H1 (cell line): ENCODE measurements at regions of chr4 and their contacts with region 1.

Region 1: GRCh38 chr4:112648263-112649054 is 11.5 kb downstream of the LARP7 start:
- DNase-seq: peak in 1 of 2 experiments; percentile 74
- H3K4me3 ChIP-seq: peak overlapping the region; percentile 75 to 100 (median 100)
- H3K27ac ChIP-seq: peak overlapping the region; percentile 92
- H3K4me1 ChIP-seq: peaks cover 0 to 10% (median 1%) of the 10 kb centered on the region in 4 experiments; a peak in 2 of 7 replicates
- H3K27me3 ChIP-seq: no peaks in the 10 kb centered on the region
- CTCF ChIP-seq: no peak
- EP300 ChIP-seq: peak in 1 of 2 experiments; percentile 64; a peak in 1 of 3 replicates
- POLR2A ChIP-seq: peak; percentile 95 to 98
- RAD21 ChIP-seq: no peak

Region 2: GRCh38 chr4:112626228-112626627 is 22.2 kb before region 1 on chr4:
- CTCF ChIA-PET with region 1: no interaction called
- POLR2A ChIA-PET with region 1: no interaction called
- DNase-seq: no peak
- H3K4me3 ChIP-seq: no peak overlapping the region
- H3K27ac ChIP-seq: no peak overlapping the region
- H3K4me1 ChIP-seq: no peaks in the 10 kb centered on the region
- H3K27me3 ChIP-seq: no peaks in the 10 kb centered on the region
- CTCF ChIP-seq: no peak
- EP300 ChIP-seq: no peak
- POLR2A ChIP-seq: no peak
- RAD21 ChIP-seq: no peak

Region 3: DNA sequence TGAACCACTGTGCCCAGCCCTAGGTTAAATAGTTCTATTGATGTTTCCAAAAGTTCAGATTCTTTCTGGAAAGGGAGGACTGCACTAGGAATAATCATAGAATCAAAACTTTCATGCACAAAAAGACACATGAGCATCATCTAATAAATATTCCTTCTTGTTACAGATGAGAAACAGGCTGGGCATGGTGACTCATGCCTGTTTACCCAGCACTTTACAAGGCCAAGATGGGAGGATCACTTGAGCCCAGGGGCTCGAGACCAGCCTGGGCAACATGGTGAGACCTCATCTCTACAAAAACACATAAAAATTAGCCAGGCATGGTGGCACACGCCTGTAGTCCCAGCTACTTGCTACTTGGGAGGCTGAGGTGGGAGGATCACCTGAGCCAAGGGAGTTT is 16.2 kb after region 1 on chr4:
- CTCF ChIA-PET with region 1: interaction called, 3 read pairs
- POLR2A ChIA-PET with region 1: interaction called, 159 read pairs
- DNase-seq: no peak
- H3K4me3 ChIP-seq: no peak overlapping the region
- H3K27ac ChIP-seq: no peak overlapping the region
- H3K4me1 ChIP-seq: peaks cover 0 to 4% (median 0%) of the 10 kb centered on the region in 4 experiments; a peak in 2 of 7 replicates
- H3K27me3 ChIP-seq: no peaks in the 10 kb centered on the region
- CTCF ChIP-seq: no peak
- EP300 ChIP-seq: no peak
- POLR2A ChIP-seq: no peak
- RAD21 ChIP-seq: no peak

Region 4: GRCh38 chr4:112680996-112681395 is 32.5 kb after region 1 on chr4:
- CTCF ChIA-PET with region 1: no interaction called
- POLR2A ChIA-PET with region 1: interaction called, 24 read pairs
- DNase-seq: no peak
- H3K4me3 ChIP-seq: no peak overlapping the region
- H3K27ac ChIP-seq: no peak overlapping the region
- H3K4me1 ChIP-seq: peaks cover 0 to 3% (median 0%) of the 10 kb centered on the region in 4 experiments; a peak in 3 of 7 replicates
- H3K27me3 ChIP-seq: no peaks in the 10 kb centered on the region
- CTCF ChIP-seq: no peak
- EP300 ChIP-seq: no peak
- POLR2A ChIP-seq: no peak
- RAD21 ChIP-seq: no peak

Region 5: GRCh38 chr4:112704991-112705845 is 56.8 kb after region 1 on chr4:
- CTCF ChIA-PET with region 1: no interaction called
- POLR2A ChIA-PET with region 1: interaction called, 222 read pairs
- DNase-seq: peak; percentile 19 to 58
- H3K4me3 ChIP-seq: peak overlapping the region; percentile 53 to 73 (median 64)
- H3K27ac ChIP-seq: peak overlapping the region; percentile 84
- H3K4me1 ChIP-seq: peaks cover 0 to 21% (median 3%) of the 10 kb centered on the region in 4 experiments; a peak in 6 of 7 replicates
- H3K27me3 ChIP-seq: no peaks in the 10 kb centered on the region
- CTCF ChIP-seq: no peak
- EP300 ChIP-seq: no peak
- POLR2A ChIP-seq: peak; percentile 60 to 76
- RAD21 ChIP-seq: no peak

Region 6: DNA sequence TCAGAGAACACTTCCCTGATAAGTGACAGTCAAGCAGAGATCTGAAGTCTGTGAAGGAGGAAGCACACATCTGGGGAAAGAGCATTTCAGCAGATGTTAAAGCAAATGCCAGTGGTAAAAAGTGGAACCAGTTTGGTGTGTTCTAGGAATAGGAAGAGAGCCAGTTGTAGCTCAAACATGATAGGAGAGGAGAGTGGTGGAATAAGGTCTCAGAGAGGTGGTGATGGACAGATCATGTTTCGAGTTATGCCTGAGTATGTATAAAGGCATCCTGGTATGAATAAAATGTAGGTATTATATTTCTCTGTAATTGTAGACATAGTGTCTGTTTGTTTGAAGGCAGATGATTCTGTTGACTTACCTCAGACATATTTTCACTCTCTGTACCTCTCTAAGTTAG is 77.6 kb after region 1 on chr4:
- CTCF ChIA-PET with region 1: no interaction called
- POLR2A ChIA-PET with region 1: interaction called, 21 read pairs
- DNase-seq: peak in 1 of 2 experiments; percentile 28
- H3K4me3 ChIP-seq: no peak overlapping the region
- H3K27ac ChIP-seq: peak overlapping the region; percentile 18; the same call in 1 of the 2 replicates
- H3K4me1 ChIP-seq: peaks cover 0 to 2% (median 0%) of the 10 kb centered on the region in 4 experiments; a peak in 1 of 7 replicates
- H3K27me3 ChIP-seq: no peaks in the 10 kb centered on the region
- CTCF ChIP-seq: no peak
- EP300 ChIP-seq: no peak
- POLR2A ChIP-seq: no peak
- RAD21 ChIP-seq: no peak

Region 7: DNA sequence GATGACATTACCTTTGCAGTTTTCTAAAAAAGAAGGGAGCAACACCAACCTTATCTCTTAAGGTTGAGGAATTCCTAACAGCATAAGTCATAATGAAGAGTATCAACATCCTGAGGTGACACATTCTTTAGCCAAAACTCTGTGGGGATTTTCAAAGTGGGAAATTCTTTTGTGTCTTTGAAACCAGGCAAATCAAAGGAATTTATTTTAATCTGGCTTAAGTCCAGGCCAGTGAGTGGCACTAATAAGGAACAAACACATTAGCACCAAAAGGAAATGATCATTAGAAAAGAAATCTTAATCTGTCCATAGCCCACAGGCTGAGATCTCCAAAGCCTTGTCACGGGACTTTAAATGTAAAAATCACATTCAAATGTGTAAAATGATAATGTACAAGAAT is 98.6 kb after region 1 on chr4:
- CTCF ChIA-PET with region 1: interaction called, 5 read pairs
- POLR2A ChIA-PET with region 1: interaction called, 306 read pairs
- DNase-seq: peak in 1 of 2 experiments; percentile 25
- H3K4me3 ChIP-seq: peak overlapping the region in 1 of 4 experiments; percentile 46; a peak in 1 of 8 replicates
- H3K27ac ChIP-seq: peak overlapping the region; percentile 42; the same call in 1 of the 2 replicates
- H3K4me1 ChIP-seq: peaks cover 4 to 21% (median 12%) of the 10 kb centered on the region in 4 experiments; a peak in 6 of 7 replicates
- H3K27me3 ChIP-seq: no peaks in the 10 kb centered on the region
- CTCF ChIP-seq: no peak
- EP300 ChIP-seq: no peak
- POLR2A ChIP-seq: no peak
- RAD21 ChIP-seq: no peak

Region 8: GRCh38 chr4:112775801-112776200 is 127.3 kb after region 1 on chr4:
- CTCF ChIA-PET with region 1: no interaction called
- POLR2A ChIA-PET with region 1: interaction called, 31 read pairs
- DNase-seq: no peak
- H3K4me3 ChIP-seq: no peak overlapping the region
- H3K27ac ChIP-seq: no peak overlapping the region
- H3K4me1 ChIP-seq: peaks cover 0 to 4% (median 2%) of the 10 kb centered on the region in 4 experiments; a peak in 3 of 7 replicates
- H3K27me3 ChIP-seq: no peaks in the 10 kb centered on the region
- CTCF ChIP-seq: no peak
- EP300 ChIP-seq: no peak
- POLR2A ChIP-seq: no peak
- RAD21 ChIP-seq: no peak